ENCODE measurements at regions of chr3 and their contacts with region 1.

Region 1: GRCh38 chr3:146065573-146066006 is 95.4 kb downstream of the PLOD2 start:
- DNase-seq: peak; percentile 67
- H3K4me3 ChIP-seq: no peak overlapping the region
- H3K27ac ChIP-seq: peak overlapping the region; percentile 5; the same call in 1 of the 2 replicates
- H3K4me1 ChIP-seq: peaks cover 19% of the 10 kb centered on the region
- H3K27me3 ChIP-seq: no peaks in the 10 kb centered on the region

Region 2: GRCh38 chr3:146177519-146177918 is 111.9 kb after region 1 on chr3:
- in situ Hi-C with region 1: loop called (anchors 10 kb)
- DNase-seq: peak; percentile 19
- H3K4me3 ChIP-seq: no peak overlapping the region
- H3K27ac ChIP-seq: no peak overlapping the region
- H3K4me1 ChIP-seq: peaks cover 4% of the 10 kb centered on the region
- H3K27me3 ChIP-seq: no peaks in the 10 kb centered on the region

Region 3: DNA sequence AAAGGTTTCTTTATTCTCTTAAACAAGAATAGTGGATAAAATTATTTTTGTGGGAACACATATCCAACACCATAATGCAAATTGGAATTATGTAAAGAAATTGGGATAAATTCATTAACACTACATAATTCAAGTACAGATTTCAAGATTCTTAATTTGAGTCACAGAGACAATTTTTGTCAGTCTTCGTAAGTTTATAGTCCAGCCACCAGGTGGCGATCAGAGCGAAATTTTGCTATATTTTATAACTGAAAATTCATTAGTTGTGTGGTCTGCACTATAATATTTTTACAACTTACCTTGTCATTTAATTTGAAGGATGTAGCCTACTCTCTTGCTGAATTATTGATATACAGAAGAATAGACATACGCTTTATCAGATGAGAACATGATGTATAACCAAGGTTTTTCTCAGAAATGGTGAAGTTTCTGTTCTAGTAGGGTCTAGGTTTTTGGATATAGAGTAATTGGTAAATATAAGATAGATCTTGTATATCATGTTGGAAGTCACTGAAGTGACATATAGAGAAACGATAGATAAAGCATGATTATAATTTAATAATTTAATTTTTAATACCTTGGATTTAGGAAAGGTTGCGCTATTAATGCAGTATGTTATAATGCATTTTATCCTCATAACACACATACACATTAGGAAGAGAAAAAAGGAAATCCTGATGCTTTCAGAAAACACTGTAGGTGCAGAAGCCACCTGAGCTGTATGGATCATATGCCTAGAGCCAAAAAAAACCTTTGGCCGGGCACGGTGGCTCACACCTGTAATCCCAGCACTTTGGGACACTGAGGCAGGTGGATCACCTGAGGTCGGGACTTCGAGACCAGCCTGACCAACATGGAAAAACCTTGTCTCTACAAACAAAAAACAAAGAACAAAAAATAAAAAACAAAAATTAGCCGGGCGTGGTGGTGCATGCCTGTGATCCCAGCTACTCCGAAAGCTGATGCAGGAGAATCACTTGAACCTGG is 153.6 kb after region 1 on chr3:
- in situ Hi-C with region 1: no loop called
- DNase-seq: peak; percentile 61
- H3K4me3 ChIP-seq: no peak overlapping the region
- H3K27ac ChIP-seq: no peak overlapping the region
- H3K4me1 ChIP-seq: peaks cover 21% of the 10 kb centered on the region
- H3K27me3 ChIP-seq: no peaks in the 10 kb centered on the region

Region 4: GRCh38 chr3:146326670-146327543 is 261.3 kb after region 1 on chr3:
- in situ Hi-C with region 1: loop called (anchors 10 kb)
- DNase-seq: peak; percentile 77
- H3K4me3 ChIP-seq: no peak overlapping the region
- H3K27ac ChIP-seq: no peak overlapping the region
- H3K4me1 ChIP-seq: no peaks in the 10 kb centered on the region
- H3K27me3 ChIP-seq: no peaks in the 10 kb centered on the region

Measured in GM23248 (cell line).